Ovary (tissue), 10 donors: ENCODE measurements at regions of chr9 and their contacts with region 1.

Region 1: DNA sequence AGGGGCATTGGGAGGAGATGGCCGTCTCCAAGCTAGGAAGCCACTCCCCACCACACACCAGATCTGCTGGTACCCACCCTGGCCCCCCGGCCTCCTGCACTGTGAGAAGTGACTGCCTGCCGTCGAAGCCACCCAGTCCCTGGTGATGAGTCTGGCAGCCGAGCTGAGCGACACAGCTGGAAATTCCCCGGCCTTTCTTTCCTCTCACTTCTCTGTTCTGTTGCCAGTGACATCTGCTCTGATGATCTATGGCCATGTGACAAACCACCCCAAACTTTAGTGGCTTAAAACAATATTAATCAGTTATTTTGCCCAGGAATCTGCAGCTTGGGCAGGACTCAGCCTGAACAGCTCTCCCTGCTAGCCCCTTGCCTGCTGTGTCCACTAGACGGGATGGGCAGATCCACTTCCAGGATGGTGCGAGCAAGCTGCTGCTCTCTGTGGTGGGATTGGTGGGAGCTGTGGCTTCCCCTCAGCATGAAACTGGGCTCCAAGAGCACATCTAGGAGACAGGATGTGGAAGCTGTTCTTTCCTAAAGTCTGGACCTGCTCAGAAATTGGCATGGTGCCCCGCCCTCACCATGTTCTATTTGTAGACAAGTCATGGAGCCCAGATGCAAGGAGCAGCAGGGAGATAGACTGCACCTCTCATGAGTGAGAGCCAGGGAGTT is 211.2 kb downstream of the GADD45G start:
- DNase-seq: peak; percentile 60 to 80 (median 66)
- H3K4me3 ChIP-seq: no peak overlapping the region
- H3K27ac ChIP-seq: peak overlapping the region in 1 of 2 donors; percentile 68
- H3K4me1 ChIP-seq: peaks cover 11% of the 10 kb centered on the region
- H3K27me3 ChIP-seq: no peaks in the 10 kb centered on the region
- CTCF ChIP-seq: no peak
- EP300 ChIP-seq: no peak
- POLR2A ChIP-seq: no peak

Region 2: GRCh38 chr9:89623925-89624420 is 192.1 kb before region 1 on chr9:
- intact Hi-C with region 1: loop called in 1 of 4 experiments (anchors 10 kb)
- DNase-seq: peak in 1 of 5 donors; percentile 62
- H3K4me3 ChIP-seq: no peak overlapping the region
- H3K27ac ChIP-seq: no peak overlapping the region
- H3K4me1 ChIP-seq: peaks cover 9% of the 10 kb centered on the region
- H3K27me3 ChIP-seq: no peaks in the 10 kb centered on the region
- CTCF ChIP-seq: no peak
- EP300 ChIP-seq: no peak
- POLR2A ChIP-seq: no peak

Region 3: GRCh38 chr9:89781838-89782517 is 34.1 kb before region 1 on chr9:
- intact Hi-C with region 1: no loop called
- DNase-seq: no peak
- H3K4me3 ChIP-seq: no peak overlapping the region
- H3K27ac ChIP-seq: no peak overlapping the region
- H3K4me1 ChIP-seq: no peaks in the 10 kb centered on the region
- H3K27me3 ChIP-seq: no peaks in the 10 kb centered on the region
- CTCF ChIP-seq: no peak
- EP300 ChIP-seq: no peak
- POLR2A ChIP-seq: no peak